Astrocyte of the cerebellum (primary cell): ENCODE measurements at regions of chr7 and their contacts with region 1.

Region 1: GRCh38 chr7:104362756-104363155 is 34.4 kb downstream of the LHFPL3 start:
- DNase-seq: no peak
- H3K4me3 ChIP-seq: no peak overlapping the region
- CTCF ChIP-seq: no peak

Region 2: DNA sequence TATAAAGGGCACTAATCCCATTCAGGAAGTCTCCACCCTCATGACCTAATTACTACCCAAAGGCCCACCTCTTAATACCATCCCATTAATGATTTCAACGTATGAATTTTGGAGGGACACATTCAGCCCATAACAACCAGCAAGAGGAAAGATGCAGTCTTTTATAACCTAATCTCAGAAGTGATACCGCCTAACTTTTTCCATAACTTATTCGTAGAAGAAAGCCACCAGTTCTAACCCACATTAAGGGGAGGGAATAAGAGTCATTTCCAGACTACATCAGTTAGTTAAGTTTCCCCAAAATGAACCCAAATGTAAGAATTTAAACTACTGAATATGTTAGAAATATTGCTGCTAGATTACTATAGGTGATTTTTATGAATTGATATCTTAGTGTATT is 66.5 kb before region 1 on chr7:
- in situ Hi-C with region 1: no loop called
- DNase-seq: no peak
- H3K4me3 ChIP-seq: no peak overlapping the region
- CTCF ChIP-seq: no peak

Region 3: DNA sequence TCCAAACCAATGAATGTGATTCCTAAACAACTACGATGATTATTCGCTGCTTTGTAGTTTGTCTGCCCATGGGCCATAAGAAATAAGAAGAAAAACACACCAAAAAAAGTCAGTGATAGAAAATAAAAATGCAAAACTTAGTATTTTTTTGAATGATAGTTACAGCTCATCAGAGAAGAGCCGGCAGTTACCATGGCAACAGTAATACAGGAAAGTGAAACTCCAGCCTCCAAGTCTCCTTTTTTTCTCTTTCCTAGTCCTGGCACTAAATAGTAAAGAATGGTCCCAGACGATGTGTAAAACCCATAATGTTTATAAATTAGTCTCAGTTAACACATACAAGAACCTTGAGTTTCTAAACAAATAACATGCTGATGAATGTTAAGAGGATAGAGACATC is 56.0 kb before region 1 on chr7:
- in situ Hi-C with region 1: loop called (anchors 5 kb)
- DNase-seq: no peak
- H3K4me3 ChIP-seq: no peak overlapping the region
- CTCF ChIP-seq: no peak